CD8-positive, alpha-beta memory T cell (primary cell): ENCODE measurements at regions of chr20 and their contacts with region 1.

Region 1: DNA sequence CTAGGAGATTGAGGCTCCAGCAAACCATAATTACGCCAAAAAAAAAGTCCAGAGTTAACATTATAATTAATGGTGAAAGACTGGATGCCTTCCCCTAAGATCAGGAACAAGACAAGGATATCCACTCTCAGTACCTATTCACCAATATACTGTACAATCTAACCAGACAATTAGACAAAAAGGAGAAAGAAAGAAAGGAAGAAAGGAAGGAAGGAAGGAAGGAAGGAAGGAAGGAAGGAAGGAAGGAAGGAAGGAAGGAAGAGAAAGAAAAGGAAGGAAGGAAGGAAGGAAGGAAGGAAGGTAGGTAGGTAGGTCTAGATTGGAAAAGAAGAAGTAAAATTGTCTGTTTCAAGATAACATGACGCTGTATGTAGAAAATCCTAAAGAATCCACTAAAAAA is 50.7 kb downstream of the TASP1 start:
- DNase-seq: no peak
- H3K4me3 ChIP-seq: no peak overlapping the region
- H3K4me3 Mint-ChIP-seq: no peak overlapping the region
- H3K27ac ChIP-seq: no peak overlapping the region
- H3K27ac Mint-ChIP-seq: peak overlapping the region in 2 of 8 donors; percentile 37 to 38
- H3K4me1 ChIP-seq: no peaks in the 10 kb centered on the region
- H3K4me1 Mint-ChIP-seq: peaks cover 5 to 23% (median 11%) of the 10 kb centered on the region in 3 donors
- H3K27me3 ChIP-seq: no peaks in the 10 kb centered on the region
- H3K27me3 Mint-ChIP-seq: no peaks in the 10 kb centered on the region

Region 2: GRCh38 chr20:13533946-13534345 is 54.1 kb before region 1 on chr20:
- CTCF ChIA-PET with region 1: no interaction called
- POLR2A ChIA-PET with region 1: no interaction called
- DNase-seq: no peak
- H3K4me3 ChIP-seq: no peak overlapping the region
- H3K4me3 Mint-ChIP-seq: no peak overlapping the region
- H3K27ac ChIP-seq: no peak overlapping the region
- H3K27ac Mint-ChIP-seq: no peak overlapping the region
- H3K4me1 ChIP-seq: no peaks in the 10 kb centered on the region
- H3K4me1 Mint-ChIP-seq: no peaks in the 10 kb centered on the region
- H3K27me3 ChIP-seq: no peaks in the 10 kb centered on the region
- H3K27me3 Mint-ChIP-seq: no peaks in the 10 kb centered on the region

Region 3: GRCh38 chr20:13610184-13610583 is 22.1 kb after region 1 on chr20:
- CTCF ChIA-PET with region 1: interaction called, 3 read pairs
- POLR2A ChIA-PET with region 1: interaction called, 13 read pairs
- DNase-seq: peak in 1 of 5 donors; percentile 5
- H3K4me3 ChIP-seq: no peak overlapping the region
- H3K4me3 Mint-ChIP-seq: no peak overlapping the region
- H3K27ac ChIP-seq: no peak overlapping the region
- H3K27ac Mint-ChIP-seq: no peak overlapping the region
- H3K4me1 ChIP-seq: no peaks in the 10 kb centered on the region
- H3K4me1 Mint-ChIP-seq: peaks cover 0 to 4% (median 2%) of the 10 kb centered on the region in 3 donors
- H3K27me3 ChIP-seq: no peaks in the 10 kb centered on the region
- H3K27me3 Mint-ChIP-seq: no peaks in the 10 kb centered on the region

Region 4: GRCh38 chr20:13755809-13756208 is 167.8 kb after region 1 on chr20:
- CTCF ChIA-PET with region 1: no interaction called
- POLR2A ChIA-PET with region 1: no interaction called
- DNase-seq: no peak
- H3K4me3 ChIP-seq: no peak overlapping the region
- H3K4me3 Mint-ChIP-seq: no peak overlapping the region
- H3K27ac ChIP-seq: no peak overlapping the region
- H3K27ac Mint-ChIP-seq: no peak overlapping the region
- H3K4me1 ChIP-seq: no peaks in the 10 kb centered on the region
- H3K4me1 Mint-ChIP-seq: no peaks in the 10 kb centered on the region
- H3K27me3 ChIP-seq: no peaks in the 10 kb centered on the region
- H3K27me3 Mint-ChIP-seq: no peaks in the 10 kb centered on the region